ENCODE measurements at regions of chr17 and their contacts with region 1.

Region 1: GRCh38 chr17:7844292-7845154 is 10.3 kb upstream of the TMEM88 start:
- DNase-seq: peak in 1 of 2 experiments; percentile 88
- H3K4me3 ChIP-seq: peak overlapping the region; percentile 70 to 98 (median 86)
- H3K27ac ChIP-seq: no peak overlapping the region
- H3K4me1 ChIP-seq: peaks cover 5 to 19% (median 12%) of the 10 kb centered on the region in 4 experiments; a peak in 6 of 7 replicates
- H3K27me3 ChIP-seq: peaks cover 16 to 40% (median 37%) of the 10 kb centered on the region in 4 experiments
- CTCF ChIP-seq: no peak
- EP300 ChIP-seq: no peak
- POLR2A ChIP-seq: peak in 1 of 2 experiments; percentile 20; a peak in 1 of 3 replicates
- RAD21 ChIP-seq: no peak

Region 2: DNA sequence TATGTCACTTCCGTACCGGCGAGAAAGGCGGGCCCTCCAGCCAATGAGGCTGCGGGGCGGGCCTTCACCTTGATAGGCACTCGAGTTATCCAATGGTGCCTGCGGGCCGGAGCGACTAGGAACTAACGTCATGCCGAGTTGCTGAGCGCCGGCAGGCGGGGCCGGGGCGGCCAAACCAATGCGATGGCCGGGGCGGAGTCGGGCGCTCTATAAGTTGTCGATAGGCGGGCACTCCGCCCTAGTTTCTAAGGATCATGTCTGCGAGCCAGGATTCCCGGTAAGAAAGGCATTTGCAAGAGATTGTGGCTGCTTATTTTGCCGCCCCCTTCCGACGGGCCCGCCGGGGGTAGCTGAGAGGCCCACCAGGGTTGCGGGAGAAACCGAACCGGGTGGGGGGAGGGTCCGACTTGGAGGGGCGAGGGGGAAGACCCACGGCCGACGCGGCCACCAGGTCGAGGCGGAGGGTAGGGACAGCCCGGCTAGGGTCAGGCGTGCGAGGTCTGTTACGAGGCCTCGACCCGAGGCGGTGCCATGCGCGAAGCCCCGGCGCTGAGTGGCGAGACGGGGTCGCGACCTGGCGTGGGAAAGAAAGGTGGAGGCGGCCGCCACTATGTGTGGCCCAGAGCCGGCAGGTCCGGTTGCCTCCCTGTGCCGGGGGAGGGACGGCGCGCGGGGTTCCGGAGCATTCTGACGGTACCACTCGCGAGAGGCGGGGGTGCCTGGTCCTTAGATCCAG is 271.8 kb before region 1 on chr17:
- CTCF ChIA-PET with region 1: no interaction called
- POLR2A ChIA-PET with region 1: no interaction called
- DNase-seq: peak; percentile 100
- H3K4me3 ChIP-seq: peak overlapping the region; percentile 97 to 99 (median 98)
- H3K27ac ChIP-seq: peak overlapping the region; percentile 99
- H3K4me1 ChIP-seq: peaks cover 4 to 10% (median 7%) of the 10 kb centered on the region in 4 experiments
- H3K27me3 ChIP-seq: no peaks in the 10 kb centered on the region
- CTCF ChIP-seq: no peak
- EP300 ChIP-seq: no peak
- POLR2A ChIP-seq: peak; percentile 96 to 98
- RAD21 ChIP-seq: no peak

Region 3: DNA sequence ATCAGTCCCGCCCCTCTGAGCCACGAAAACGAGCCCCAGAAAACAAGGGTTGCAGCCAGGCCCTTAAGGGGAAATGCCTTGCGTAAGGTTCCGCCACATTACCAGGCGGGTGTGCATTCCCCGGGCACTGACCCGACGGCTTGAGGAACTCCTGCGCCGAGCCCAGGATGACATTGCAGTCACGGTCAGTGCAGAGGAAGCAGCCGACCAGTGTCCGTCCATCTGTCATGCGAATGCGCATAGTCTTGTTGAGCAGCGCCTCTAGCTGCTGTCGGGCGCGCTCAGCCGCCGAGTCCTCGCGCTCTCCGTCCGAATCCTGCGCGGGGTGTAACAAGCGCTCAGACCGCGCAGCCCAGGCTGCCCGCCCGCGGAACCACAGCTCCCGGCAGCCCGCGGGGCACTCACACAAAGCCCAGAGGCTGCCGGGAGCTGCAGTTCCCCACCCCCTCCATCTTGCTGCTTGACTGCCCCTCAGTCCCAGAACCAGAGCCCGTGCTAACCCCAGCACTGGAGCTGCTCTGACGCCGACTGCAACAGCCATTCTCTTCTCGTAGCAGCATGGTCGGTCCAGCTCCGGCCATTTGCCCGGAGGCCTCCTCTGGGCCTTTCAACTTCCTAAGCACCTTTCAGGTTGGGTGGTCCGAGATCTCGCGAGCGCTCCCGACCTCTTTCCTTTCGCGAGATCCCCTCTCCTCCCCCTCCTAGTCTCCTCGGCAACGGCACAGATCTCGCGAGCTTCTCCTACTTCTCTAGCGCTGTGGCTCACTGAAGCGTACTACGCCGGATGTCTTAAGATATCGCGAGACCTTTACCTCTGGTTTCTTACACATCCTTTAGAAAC is 12.6 kb after region 1 on chr17 and contains the start of gene NAA38:
- CTCF ChIA-PET with region 1: interaction called, 10 read pairs
- POLR2A ChIA-PET with region 1: interaction called, 34 read pairs
- DNase-seq: peak; percentile 92 to 94
- H3K4me3 ChIP-seq: peak within 1 kb of the TSS; percentile 70 to 86 (median 80)
- H3K27ac ChIP-seq: peak within 1 kb of the TSS; percentile 97
- H3K4me1 ChIP-seq: peaks cover 0 to 30% (median 26%) of the 10 kb centered on the region in 4 experiments; a peak in 6 of 7 replicates
- H3K27me3 ChIP-seq: peaks cover 30 to 49% (median 44%) of the 10 kb centered on the region in 4 experiments
- CTCF ChIP-seq: peak; percentile 31 to 54 (median 45); a peak in 3 of 4 replicates
- EP300 ChIP-seq: no peak
- POLR2A ChIP-seq: no peak; a peak in 1 of 3 replicates
- RAD21 ChIP-seq: peak; percentile 3 to 35; a peak in 2 of 4 replicates
- total RNA-seq, gene NAA38: 27.0 and 30.2 TPM in 2 replicates